ENCODE measurements at regions of chr20 and their contacts with region 1.

Region 1: DNA sequence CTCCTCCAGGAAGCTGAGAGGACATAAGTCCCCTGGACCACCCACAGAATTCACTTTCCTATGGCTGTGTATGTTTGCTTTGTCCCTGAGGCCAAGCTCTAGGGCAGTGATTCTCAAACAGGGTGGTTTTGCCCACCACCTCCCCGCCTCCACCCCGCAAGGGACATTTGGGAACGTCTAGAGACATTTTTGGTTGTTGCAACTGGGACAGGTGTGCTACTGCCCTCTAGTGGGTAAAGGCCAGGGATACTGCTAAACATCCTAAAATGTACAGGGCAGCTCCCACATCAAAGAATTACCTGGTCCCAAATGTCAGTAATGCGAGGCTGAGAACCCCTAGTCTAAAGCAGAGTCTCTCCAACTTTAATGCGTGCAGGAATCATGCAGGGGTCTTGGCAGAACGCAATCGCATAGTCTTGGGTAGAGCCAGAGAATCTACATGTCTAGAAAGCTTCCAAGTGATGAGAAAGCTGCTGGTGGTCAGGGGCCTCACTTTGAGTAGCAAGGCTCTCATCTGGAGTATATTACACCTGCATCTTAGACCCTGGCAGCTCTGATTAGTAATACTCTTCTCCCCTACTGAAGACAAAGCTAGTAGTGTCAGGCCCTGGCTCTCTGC is 5.1 kb downstream of the KCNS1 start:
- DNase-seq: peak; percentile 66
- H3K4me3 ChIP-seq: no peak overlapping the region
- H3K27ac ChIP-seq: no peak overlapping the region
- H3K4me1 ChIP-seq: peaks cover 0 to 4% of the 10 kb centered on the region in 2 experiments; a peak in 1 of 4 replicates
- H3K27me3 ChIP-seq: no peaks in the 10 kb centered on the region
- CTCF ChIP-seq: peak; percentile 77
- EP300 ChIP-seq: no peak; a peak in 1 of 4 replicates
- RAD21 ChIP-seq: peak; percentile 78

Region 2: GRCh38 chr20:45011108-45011526 is 84.7 kb before region 1 on chr20:
- CTCF ChIA-PET with region 1: interaction called, 74 read pairs
- POLR2A ChIA-PET with region 1: no interaction called
- DNase-seq: peak; percentile 57
- H3K4me3 ChIP-seq: peak overlapping the region in 1 of 2 experiments; percentile 33; a peak in 1 of 4 replicates
- H3K27ac ChIP-seq: peak overlapping the region; percentile 51 to 96; a peak in 3 of 4 replicates
- H3K4me1 ChIP-seq: peaks cover 15 to 31% of the 10 kb centered on the region in 2 experiments
- H3K27me3 ChIP-seq: no peaks in the 10 kb centered on the region
- CTCF ChIP-seq: peak; percentile 96
- EP300 ChIP-seq: no peak
- RAD21 ChIP-seq: peak; percentile 82

Region 3: DNA sequence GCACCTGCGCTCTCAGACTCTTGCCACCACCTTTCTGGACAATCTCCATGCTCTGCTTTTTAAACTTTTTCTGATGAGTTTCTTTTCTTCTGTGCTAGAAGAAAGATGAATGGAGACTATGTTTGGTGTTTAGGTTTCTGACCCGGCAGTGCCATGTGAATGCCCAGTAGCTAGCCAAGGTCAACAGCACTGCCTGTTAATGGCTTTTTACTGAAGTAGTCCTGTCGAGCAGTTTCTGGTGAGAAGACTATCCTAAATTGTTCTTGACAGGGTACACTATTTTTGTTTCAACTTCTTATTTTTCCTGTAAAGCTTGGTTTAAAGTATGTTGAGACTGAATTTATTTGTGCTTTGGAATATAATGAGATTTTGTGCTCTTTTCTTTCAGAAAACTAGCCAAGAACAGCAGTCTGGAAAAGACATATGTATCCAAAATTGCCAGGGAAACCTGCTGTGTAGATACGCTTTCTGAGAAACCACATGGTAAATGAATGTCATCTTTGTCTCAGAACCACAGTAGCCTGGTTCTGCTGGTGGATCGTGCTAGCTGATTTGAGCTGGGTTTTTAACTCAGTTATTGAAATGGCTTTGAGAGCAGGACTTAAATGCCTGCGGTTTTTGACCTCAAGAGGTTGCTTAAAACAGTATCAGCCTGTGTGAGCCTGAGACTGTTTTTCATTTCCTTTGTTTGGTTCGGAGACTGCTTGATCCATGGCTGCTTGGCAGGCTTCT is 43.0 kb before region 1 on chr20:
- CTCF ChIA-PET with region 1: interaction called, 31 read pairs
- POLR2A ChIA-PET with region 1: interaction called, 3 read pairs
- DNase-seq: no peak
- H3K4me3 ChIP-seq: no peak overlapping the region
- H3K27ac ChIP-seq: peak overlapping the region; percentile 87 to 88
- H3K4me1 ChIP-seq: peaks cover 3 to 24% of the 10 kb centered on the region in 2 experiments; a peak in 3 of 4 replicates
- H3K27me3 ChIP-seq: no peaks in the 10 kb centered on the region
- CTCF ChIP-seq: no peak
- EP300 ChIP-seq: peak in 1 of 2 experiments; percentile 55; a peak in 1 of 4 replicates
- RAD21 ChIP-seq: no peak

Region 4: GRCh38 chr20:45070932-45071632 is 24.8 kb before region 1 on chr20:
- CTCF ChIA-PET with region 1: interaction called, 27 read pairs
- POLR2A ChIA-PET with region 1: no interaction called
- DNase-seq: no peak
- H3K4me3 ChIP-seq: no peak overlapping the region
- H3K27ac ChIP-seq: no peak overlapping the region
- H3K4me1 ChIP-seq: no peaks in the 10 kb centered on the region; a peak in 2 of 4 replicates
- H3K27me3 ChIP-seq: no peaks in the 10 kb centered on the region
- CTCF ChIP-seq: no peak
- EP300 ChIP-seq: peak in 1 of 2 experiments; percentile 75; a peak in 1 of 4 replicates
- RAD21 ChIP-seq: no peak

Region 5: DNA sequence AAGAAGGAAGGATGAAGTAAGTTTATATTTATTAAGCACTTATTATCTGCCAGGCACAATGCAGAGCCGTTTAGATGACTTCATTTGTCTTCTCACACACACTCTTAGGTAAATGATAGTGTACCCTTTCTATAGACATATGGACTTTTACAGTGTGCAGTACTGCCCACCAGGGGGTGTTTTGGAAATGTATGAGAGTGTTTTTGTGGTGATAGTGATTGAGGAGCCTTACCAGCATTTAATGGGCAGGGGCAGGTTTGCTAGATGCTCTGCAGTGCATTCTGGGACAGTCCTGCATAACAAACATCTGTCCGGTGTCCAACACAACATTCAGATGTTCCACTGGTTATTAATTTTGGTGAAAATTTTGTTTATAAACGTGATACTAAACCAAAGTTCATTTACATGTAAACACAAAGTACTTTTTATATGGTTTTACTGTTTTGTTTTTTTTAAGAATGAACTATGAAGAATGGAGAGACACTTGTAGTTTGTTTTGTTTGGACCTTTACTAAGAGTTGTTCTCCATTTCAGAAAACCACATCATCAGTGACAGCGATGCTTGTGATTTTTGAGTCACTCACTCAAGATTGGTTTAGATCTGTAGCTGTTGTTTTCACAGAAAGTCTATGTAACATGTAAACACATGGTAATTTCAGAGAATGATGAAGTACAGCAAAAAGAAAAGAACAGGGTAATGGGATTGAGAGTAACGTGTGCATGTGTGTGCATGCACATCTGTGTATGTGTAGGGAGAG is 14.8 kb before region 1 on chr20:
- CTCF ChIA-PET with region 1: interaction called, 27 read pairs
- POLR2A ChIA-PET with region 1: no interaction called
- DNase-seq: no peak
- H3K4me3 ChIP-seq: no peak overlapping the region
- H3K27ac ChIP-seq: no peak overlapping the region
- H3K4me1 ChIP-seq: no peaks in the 10 kb centered on the region
- H3K27me3 ChIP-seq: no peaks in the 10 kb centered on the region
- CTCF ChIP-seq: peak; percentile 59
- EP300 ChIP-seq: no peak
- RAD21 ChIP-seq: no peak

Region 6: GRCh38 chr20:45111799-45112471 is 16.1 kb after region 1 on chr20:
- CTCF ChIA-PET with region 1: interaction called, 158 read pairs
- POLR2A ChIA-PET with region 1: no interaction called
- DNase-seq: peak; percentile 59
- H3K4me3 ChIP-seq: no peak overlapping the region; a peak in 1 of 4 replicates
- H3K27ac ChIP-seq: no peak overlapping the region
- H3K4me1 ChIP-seq: no peaks in the 10 kb centered on the region
- H3K27me3 ChIP-seq: no peaks in the 10 kb centered on the region
- CTCF ChIP-seq: peak; percentile 71
- EP300 ChIP-seq: no peak
- RAD21 ChIP-seq: peak; percentile 33; the same call in 1 of the 2 replicates